ENCODE measurements at regions of chr1 and their contacts with region 1.

Region 1: GRCh38 chr1:46179138-46180081 is 3.1 kb upstream of the P3R3URF start:
- DNase-seq: peak; percentile 81
- CTCF ChIP-seq: peak; percentile 91

Region 2: DNA sequence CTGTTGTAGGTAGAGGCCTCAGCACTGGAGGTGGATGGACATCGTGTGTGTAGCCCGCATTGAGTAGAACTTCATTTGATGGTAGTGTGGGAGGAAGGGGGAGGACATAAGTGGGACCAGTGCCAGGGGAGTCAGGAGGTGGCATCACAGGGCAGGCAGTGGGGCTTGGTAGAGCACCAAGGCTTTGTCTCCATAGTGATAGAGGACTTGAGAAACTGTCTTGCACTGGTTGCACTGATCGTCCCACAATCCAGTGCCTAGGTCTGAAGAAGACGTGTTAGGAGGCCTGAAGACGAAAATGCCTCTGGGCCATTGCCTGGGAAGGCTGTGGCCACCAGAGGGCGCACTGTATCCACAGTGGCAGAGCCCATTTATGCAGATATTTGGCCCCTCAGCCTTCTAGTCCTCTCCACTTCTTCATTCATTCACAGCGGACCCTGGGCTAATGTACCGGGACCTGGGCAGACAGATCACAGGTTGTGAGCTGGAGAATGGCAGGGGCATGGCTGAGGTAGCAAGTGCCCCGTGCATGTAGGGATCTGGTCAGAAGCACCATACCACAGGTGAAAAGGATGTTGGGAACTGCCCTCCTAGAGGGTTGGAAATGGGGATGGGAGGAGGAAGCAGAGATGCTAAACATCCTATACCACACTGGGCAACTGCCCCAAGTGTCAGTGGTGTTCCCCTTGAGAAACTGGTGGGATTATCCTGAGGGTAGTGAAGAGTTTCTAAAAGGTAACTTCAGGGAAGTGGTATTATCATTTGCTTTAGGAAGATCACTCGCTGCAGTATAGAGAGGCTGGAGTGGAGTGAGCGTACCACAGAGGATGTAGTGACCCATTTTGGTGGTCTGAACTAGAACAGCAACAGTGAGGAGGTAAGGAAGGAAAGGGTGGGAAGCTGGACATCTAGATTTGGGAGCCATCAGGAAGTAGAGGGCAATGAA is 142.2 kb before region 1 on chr1:
- in situ Hi-C with region 1: loop called (anchors 5 kb)
- DNase-seq: peak; percentile 84
- CTCF ChIP-seq: peak; percentile 98

Region 3: DNA sequence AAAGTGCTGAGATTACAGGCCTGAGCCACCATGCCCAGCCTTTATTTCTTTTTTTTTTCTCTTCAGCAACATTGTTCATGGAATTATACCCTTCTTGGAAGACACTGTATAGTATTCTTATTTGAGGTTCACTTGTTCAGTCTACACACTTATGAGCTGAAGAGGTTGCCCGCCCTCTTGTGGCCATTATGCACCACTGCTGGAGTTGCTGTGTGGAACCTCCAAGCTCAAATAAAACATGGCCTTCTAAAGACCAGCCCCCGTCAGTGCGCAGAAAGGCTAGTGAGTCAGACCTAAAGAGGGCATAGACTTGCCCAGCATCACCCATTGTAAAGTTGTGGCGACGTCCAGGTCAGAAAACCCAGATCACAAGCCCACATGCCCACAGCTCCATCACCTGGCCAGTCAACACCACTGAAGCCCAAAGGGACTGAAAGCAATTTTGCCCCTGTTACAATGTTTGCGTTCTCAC is 44.1 kb after region 1 on chr1:
- in situ Hi-C with region 1: no loop called
- DNase-seq: peak; percentile 77
- CTCF ChIP-seq: peak; percentile 94

Measured in GM13976 (cell line).